ENCODE measurements at regions of chr2 and their contacts with region 1.

Region 1: GRCh38 chr2:118855451-118856279 is 8.2 kb upstream of the EN1 start:
- DNase-seq: peak; percentile 55 to 80
- ATAC-seq: peak; percentile 81 to 94 (median 90)
- H3K4me3 ChIP-seq: peak overlapping the region in 6 of 10 donors; percentile 24 to 36 (median 35)
- H3K27ac ChIP-seq: no peak overlapping the region
- H3K4me1 ChIP-seq: peaks cover 3 to 40% (median 26%) of the 10 kb centered on the region in 9 donors
- H3K27me3 ChIP-seq: peaks cover 63 to 100% (median 98%) of the 10 kb centered on the region in 7 donors
- CTCF ChIP-seq: peak; percentile 89 to 97 (median 95)

Region 2: GRCh38 chr2:118032169-118033013 is 823.3 kb before region 1 on chr2:
- intact Hi-C with region 1: loop called in 2 of 10 experiments (anchors 5 kb)
- DNase-seq: no peak
- ATAC-seq: peak in 3 of 8 donors; percentile 34 to 57 (median 51)
- H3K4me3 ChIP-seq: no peak overlapping the region
- H3K27ac ChIP-seq: no peak overlapping the region
- H3K4me1 ChIP-seq: no peaks in the 10 kb centered on the region
- H3K27me3 ChIP-seq: peaks cover 0 to 54% (median 31%) of the 10 kb centered on the region in 7 donors
- CTCF ChIP-seq: peak; percentile 48 to 83 (median 76)

Region 3: DNA sequence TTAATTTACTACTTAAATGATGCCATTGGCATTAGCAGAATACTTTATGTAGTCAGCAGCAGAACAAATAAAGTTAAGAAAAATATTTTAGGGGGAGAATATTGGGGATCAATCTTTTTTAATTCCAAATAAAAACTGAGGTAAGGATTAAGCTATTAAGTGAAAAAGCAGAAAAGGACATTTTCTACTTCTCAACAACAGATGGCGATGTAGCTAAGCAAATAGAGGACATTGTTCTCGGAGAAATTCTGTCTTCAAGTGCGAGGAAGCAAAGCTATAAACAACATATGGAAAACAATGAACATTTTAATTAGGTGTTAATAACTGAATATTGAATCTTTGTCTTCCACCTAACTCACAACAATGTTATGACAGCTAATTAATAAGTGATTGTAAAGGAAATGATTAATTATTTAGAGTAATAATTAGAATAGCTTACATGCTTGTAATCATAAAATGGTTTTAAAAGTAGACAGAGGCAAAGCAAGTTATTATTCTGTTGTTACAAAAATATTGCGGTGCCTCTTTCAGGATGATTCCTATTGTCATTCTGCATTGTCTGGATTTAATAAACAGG is 808.9 kb before region 1 on chr2:
- intact Hi-C with region 1: loop called in 8 of 10 experiments (anchors 2 to 10 kb)
- DNase-seq: no peak
- ATAC-seq: no peak
- H3K4me3 ChIP-seq: no peak overlapping the region
- H3K27ac ChIP-seq: no peak overlapping the region
- H3K4me1 ChIP-seq: peaks cover 0 to 22% (median 0%) of the 10 kb centered on the region in 9 donors
- H3K27me3 ChIP-seq: peaks cover 0 to 82% (median 58%) of the 10 kb centered on the region in 7 donors
- CTCF ChIP-seq: peak in 8 of 9 donors; percentile 35 to 77 (median 64)

Region 4: GRCh38 chr2:118221666-118222594 is 633.7 kb before region 1 on chr2:
- intact Hi-C with region 1: loop called (anchors 1 to 5 kb)
- DNase-seq: peak in 1 of 2 donors; percentile 21
- ATAC-seq: peak in 7 of 8 donors; percentile 55 to 79 (median 68)
- H3K4me3 ChIP-seq: no peak overlapping the region
- H3K27ac ChIP-seq: no peak overlapping the region
- H3K4me1 ChIP-seq: peaks cover 4 to 28% (median 14%) of the 10 kb centered on the region in 9 donors
- H3K27me3 ChIP-seq: peaks cover 8 to 100% (median 98%) of the 10 kb centered on the region in 7 donors
- CTCF ChIP-seq: peak; percentile 11 to 72 (median 59)

Region 5: DNA sequence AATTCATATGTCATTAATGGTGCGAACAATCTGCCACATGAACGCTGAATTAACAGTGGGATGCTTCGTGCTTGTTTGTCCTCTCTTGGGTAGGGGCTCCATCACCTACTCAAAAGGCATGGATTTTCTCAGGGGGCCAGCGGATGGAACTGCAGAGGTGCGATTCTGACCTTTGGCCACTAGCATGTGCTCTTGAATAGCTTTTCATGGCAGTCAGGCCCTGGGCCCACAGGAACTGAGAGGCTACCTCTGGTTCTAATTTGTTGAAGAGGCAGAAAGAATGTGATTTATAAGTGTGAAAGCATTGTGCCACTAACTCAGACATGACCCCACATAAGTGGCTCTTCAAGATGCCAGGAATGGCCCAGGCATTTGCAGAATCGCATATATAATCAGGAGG is 484.1 kb before region 1 on chr2:
- intact Hi-C with region 1: loop called in 4 of 10 experiments (anchors 5 to 10 kb)
- DNase-seq: no peak
- ATAC-seq: peak in 1 of 8 donors; percentile 37
- H3K4me3 ChIP-seq: no peak overlapping the region
- H3K27ac ChIP-seq: no peak overlapping the region
- H3K4me1 ChIP-seq: no peaks in the 10 kb centered on the region
- H3K27me3 ChIP-seq: peaks cover 0 to 39% (median 7%) of the 10 kb centered on the region in 7 donors
- CTCF ChIP-seq: peak in 6 of 9 donors; percentile 12 to 49 (median 33)

Region 6: DNA sequence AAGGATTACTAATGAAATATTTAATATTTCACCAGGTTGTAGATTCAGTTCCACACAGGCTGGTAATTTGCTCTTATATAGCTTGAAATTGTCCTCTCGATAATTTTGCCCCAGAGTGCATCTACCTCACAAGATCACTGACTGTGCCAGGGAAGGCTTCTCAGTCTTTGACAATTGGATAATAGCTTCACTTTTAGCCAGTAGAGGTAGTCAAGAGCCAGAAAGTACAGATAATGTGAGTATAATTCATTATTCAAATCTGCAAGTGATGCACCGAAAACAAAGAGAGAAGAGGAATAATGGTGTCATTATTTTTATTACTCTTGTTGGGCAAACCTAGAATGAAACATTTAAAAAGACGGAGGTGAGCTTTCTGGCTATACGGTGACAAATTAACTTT is 301.0 kb before region 1 on chr2:
- intact Hi-C with region 1: loop called in 1 of 10 experiments (anchors 10 kb)
- DNase-seq: no peak
- ATAC-seq: no peak
- H3K4me3 ChIP-seq: no peak overlapping the region
- H3K27ac ChIP-seq: no peak overlapping the region
- H3K4me1 ChIP-seq: no peaks in the 10 kb centered on the region
- H3K27me3 ChIP-seq: peaks cover 0 to 9% (median 0%) of the 10 kb centered on the region in 7 donors
- CTCF ChIP-seq: peak in 1 of 9 donors; percentile 12

Measured in heart right ventricle (tissue), 16 donors.